Dorsolateral prefrontal cortex (tissue), 120 donors: ENCODE measurements at regions of chr5 and their contacts with region 1.

Region 1: GRCh38 chr5:180071531-180072255 is at the start of gene RNF130:
- DNase-seq: peak; percentile 81 to 95 (median 88)
- H3K4me3 ChIP-seq: peak within 1 kb of the TSS; percentile 50 to 99 (median 94)
- H3K27ac ChIP-seq: peak within 1 kb of the TSS; percentile 85 to 99 (median 98)
- H3K27me3 ChIP-seq: no peaks in the 10 kb centered on the region
- CTCF ChIP-seq: peak in 22 of 56 donors; percentile 3 to 40 (median 20)
- total RNA-seq, gene RNF130: 95.0 to 273 (median 136) TPM

Region 2: DNA sequence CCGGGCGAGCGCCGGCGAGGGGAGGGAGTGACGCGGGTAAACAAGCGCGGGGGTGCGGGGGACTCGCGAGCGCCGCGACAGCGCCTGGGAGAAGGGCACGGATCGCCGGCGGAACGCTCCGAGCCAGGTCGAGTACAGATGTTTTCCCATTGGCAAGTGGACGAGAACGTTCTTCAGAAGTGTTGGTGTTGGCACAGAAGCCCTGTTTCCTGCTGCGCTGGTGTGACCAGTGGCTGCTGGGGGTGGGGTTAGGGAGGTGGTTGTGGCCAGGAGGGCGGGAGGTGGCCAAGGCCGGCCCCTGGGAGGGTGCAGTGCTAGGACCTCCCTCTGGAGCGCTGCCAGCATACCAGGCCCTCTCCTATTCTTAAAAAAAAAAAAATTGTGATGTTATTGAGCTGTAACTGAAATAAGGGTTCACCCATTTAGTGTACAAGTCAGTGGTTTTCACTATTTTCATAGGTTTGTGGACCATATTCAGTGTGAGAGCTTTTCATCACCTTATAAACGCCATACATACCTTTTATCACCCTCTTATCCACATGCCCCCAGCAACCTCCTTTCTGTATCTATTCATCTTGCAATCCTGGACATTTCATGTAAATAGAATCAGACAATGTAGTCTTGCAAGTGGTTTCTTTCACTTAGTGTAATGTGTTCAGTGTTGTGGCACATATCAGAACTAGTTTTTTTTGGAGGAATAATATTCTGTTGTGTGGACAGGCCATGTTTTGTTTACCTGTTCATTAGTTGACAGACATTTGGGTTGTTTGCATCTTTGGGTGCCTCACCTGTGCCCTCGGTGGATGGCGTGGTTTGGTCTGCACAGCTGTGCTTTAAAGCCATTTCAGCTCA is 249.9 kb before region 1 on chr5:
- intact Hi-C with region 1: loop called in 1 of 2 experiments (anchors 5 kb)
- DNase-seq: peak; percentile 76 to 94 (median 90)
- H3K4me3 ChIP-seq: peak overlapping the region; percentile 77 to 100 (median 98)
- H3K27ac ChIP-seq: peak overlapping the region; percentile 93 to 100 (median 99)
- H3K27me3 ChIP-seq: no peaks in the 10 kb centered on the region
- CTCF ChIP-seq: peak in 20 of 56 donors; percentile 5 to 30 (median 18)

Region 3: GRCh38 chr5:179974946-179975712 is 96.6 kb before region 1 on chr5:
- intact Hi-C with region 1: loop called in 1 of 2 experiments (anchors 5 kb)
- DNase-seq: peak; percentile 43 to 73 (median 60)
- H3K4me3 ChIP-seq: peak overlapping the region in 14 of 59 donors; percentile 6 to 34 (median 13)
- H3K27ac ChIP-seq: peak overlapping the region in 51 of 59 donors; percentile 7 to 92 (median 59)
- H3K27me3 ChIP-seq: no peaks in the 10 kb centered on the region
- CTCF ChIP-seq: peak in 55 of 56 donors; percentile 25 to 73 (median 51)

Region 4: GRCh38 chr5:180007582-180007981 is 64.1 kb before region 1 on chr5:
- intact Hi-C with region 1: loop called in 1 of 2 experiments (anchors 5 kb)
- DNase-seq: peak in 2 of 10 donors; percentile 25 to 88
- H3K4me3 ChIP-seq: peak overlapping the region in 7 of 59 donors; percentile 0 to 31 (median 9)
- H3K27ac ChIP-seq: peak overlapping the region in 55 of 59 donors; percentile 6 to 91 (median 58)
- H3K27me3 ChIP-seq: no peaks in the 10 kb centered on the region
- CTCF ChIP-seq: no peak

Region 5: DNA sequence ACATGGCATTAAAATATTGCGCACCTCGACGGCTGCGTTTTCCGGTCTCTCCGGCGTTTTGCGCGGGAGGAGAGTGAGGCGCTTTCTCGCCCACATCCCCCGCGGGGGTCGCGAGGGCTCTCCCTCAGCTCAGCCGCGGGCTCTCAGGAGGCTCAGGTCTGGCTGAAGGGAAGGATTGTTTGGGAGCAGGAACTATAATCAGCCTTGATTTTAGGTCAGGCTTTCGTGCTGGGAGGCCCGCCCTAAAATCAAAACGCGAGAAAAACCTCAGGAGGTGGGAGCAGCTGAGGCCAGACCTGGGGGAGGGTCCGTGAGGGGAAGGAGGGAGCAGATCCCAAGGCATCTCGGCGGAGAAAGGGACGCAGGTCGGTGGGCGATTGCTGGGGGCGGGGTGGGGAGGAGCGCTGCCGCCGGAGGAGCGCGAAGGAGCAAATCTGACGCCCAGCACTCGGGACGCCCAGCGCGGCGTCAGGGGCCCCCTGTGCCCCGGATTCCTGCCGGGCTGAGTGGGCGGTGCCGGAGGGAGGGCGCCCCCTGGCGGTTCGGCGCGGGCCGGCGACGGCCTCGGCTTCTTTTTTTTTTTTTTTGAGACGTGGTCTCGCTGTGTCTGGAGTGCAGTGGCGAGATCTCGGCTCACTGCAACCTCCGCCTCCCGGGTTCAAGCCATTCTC is 18.5 kb after region 1 on chr5:
- intact Hi-C with region 1: loop called in 1 of 2 experiments (anchors 1 kb)
- DNase-seq: peak in 7 of 10 donors; percentile 20 to 82 (median 63)
- H3K4me3 ChIP-seq: peak overlapping the region; percentile 43 to 78 (median 63)
- H3K27ac ChIP-seq: peak overlapping the region in 52 of 59 donors; percentile 16 to 88 (median 70)
- H3K27me3 ChIP-seq: no peaks in the 10 kb centered on the region
- CTCF ChIP-seq: peak; percentile 66 to 97 (median 90)